ENCODE measurements at regions of chr5 and their contacts with region 1.

Region 1: GRCh38 chr5:103188436-103188835 is 68.3 kb downstream of the PPIP5K2 start:
- DNase-seq: no peak
- ATAC-seq: no peak
- H3K4me3 Mint-ChIP-seq: no peak overlapping the region
- H3K27ac Mint-ChIP-seq: no peak overlapping the region
- H3K4me1 Mint-ChIP-seq: peaks cover 7% of the 10 kb centered on the region
- H3K27me3 Mint-ChIP-seq: no peaks in the 10 kb centered on the region

Region 2: DNA sequence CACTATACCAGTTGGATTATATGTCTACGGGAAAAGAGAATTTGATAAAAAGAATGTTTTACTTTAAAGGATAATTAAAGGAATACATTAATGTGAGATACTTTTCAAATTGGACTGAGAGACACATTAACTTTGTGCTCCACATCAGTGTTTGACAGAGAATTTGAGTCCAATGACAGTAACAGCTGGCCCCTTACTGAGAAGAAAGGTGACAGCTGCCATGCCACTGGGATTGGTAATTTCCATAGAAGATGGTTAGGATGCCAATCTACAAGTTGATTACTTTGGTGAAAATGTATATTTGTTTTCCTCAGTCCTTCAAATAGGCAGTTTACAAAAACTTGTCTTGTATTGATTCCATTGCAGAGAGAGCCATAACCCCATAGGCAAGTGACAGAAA is 1470.7 kb before region 1 on chr5:
- CTCF ChIA-PET with region 1: no interaction called
- POLR2A ChIA-PET with region 1: no interaction called
- intact Hi-C with region 1: no loop called
- DNase-seq: no peak
- ATAC-seq: no peak
- H3K4me3 Mint-ChIP-seq: no peak overlapping the region
- H3K27ac Mint-ChIP-seq: no peak overlapping the region
- H3K4me1 Mint-ChIP-seq: no peaks in the 10 kb centered on the region
- H3K27me3 Mint-ChIP-seq: no peaks in the 10 kb centered on the region

Region 3: DNA sequence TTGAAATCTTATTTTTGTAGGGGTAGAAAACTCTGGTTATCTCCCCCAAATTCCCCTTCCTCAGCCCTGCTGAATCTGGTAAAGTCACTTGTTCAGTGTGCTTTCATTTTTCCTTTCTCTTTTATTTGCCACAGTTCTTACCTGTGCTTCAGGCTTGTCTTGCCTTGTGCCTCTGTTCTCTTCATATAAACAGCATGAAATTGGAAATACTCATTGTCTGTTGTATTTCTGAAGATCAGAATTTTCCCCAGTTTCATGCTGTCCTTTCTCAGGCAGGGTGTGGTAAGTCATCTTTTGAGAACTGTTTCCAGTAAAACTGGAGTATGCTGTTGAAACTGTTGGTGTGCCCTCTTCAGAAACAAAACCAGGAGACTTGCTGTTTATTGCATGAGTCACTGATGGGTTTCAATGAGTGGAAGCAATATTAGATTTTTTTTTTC is 426.3 kb before region 1 on chr5:
- CTCF ChIA-PET with region 1: no interaction called
- POLR2A ChIA-PET with region 1: interaction called, 10 read pairs
- intact Hi-C with region 1: no loop called
- DNase-seq: no peak
- ATAC-seq: peak; percentile 75
- H3K4me3 Mint-ChIP-seq: peak overlapping the region; percentile 59
- H3K27ac Mint-ChIP-seq: peak overlapping the region; percentile 85
- H3K4me1 Mint-ChIP-seq: peaks cover 85% of the 10 kb centered on the region
- H3K27me3 Mint-ChIP-seq: no peaks in the 10 kb centered on the region

Region 4: GRCh38 chr5:103151156-103151555 is 37.3 kb before region 1 on chr5:
- CTCF ChIA-PET with region 1: no interaction called
- POLR2A ChIA-PET with region 1: no interaction called
- intact Hi-C with region 1: no loop called
- DNase-seq: no peak
- ATAC-seq: no peak
- H3K4me3 Mint-ChIP-seq: no peak overlapping the region
- H3K27ac Mint-ChIP-seq: no peak overlapping the region
- H3K4me1 Mint-ChIP-seq: peaks cover 2% of the 10 kb centered on the region
- H3K27me3 Mint-ChIP-seq: no peaks in the 10 kb centered on the region

Measured in activated CD4-positive, alpha-beta T cell treated with anti-CD3 and anti-CD28 coated beads for 36 hours (primary cell).